HEK293T (cell line): ENCODE measurements at regions of chr3 and their contacts with region 1.

Region 1: DNA sequence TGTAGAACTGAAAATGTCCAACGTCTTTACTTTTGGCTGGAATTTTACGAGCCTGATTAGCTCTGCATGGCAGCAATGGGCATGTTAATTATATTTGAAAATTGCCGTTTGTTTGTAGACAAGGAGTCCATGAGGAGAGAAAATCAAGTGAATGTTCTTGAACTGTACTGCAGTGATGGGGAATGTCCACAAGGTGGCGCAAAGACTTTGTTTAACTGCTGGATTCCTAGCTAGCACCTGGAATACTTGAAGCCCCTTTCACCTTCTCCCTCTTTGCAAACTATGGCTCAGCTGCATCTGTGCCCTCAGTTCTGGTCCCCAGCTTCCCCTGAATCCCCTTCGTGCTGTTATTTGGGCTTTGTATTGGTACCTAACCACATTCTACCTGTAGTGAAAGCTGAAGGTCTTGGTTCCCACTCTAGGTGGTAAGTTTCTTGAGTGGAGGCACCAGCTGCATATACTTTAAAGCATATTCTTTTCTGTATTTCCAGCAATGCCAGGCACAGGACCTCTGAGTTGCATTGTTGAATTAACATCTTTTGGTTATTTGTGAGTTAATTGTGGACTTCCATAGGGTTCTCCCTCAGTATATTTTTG is 25.3 kb downstream of the EXOG start:
- DNase-seq: peak; percentile 70

Region 2: DNA sequence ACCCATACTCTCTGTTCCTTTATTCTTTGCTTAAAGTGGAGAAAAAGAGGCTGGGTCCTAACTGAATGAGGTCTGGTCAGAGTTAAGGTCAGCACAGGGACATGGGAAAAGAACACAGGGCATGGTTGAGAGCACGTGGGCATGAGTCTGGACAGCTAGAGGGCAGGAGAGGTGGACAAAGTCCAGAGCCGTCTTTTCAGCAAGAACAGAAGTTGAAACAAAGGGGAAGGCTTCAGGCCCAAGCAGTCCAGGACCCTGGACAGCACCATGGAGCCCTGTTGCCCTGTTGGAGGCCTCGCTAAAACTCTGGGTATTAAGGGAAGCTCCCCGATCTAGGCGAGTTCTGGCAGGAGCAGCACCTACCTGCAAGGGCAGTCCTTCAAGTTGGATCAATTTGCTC is 124.2 kb before region 1 on chr3:
- CTCF ChIA-PET with region 1: no interaction called
- POLR2A ChIA-PET with region 1: no interaction called
- DNase-seq: no peak

Region 3: DNA sequence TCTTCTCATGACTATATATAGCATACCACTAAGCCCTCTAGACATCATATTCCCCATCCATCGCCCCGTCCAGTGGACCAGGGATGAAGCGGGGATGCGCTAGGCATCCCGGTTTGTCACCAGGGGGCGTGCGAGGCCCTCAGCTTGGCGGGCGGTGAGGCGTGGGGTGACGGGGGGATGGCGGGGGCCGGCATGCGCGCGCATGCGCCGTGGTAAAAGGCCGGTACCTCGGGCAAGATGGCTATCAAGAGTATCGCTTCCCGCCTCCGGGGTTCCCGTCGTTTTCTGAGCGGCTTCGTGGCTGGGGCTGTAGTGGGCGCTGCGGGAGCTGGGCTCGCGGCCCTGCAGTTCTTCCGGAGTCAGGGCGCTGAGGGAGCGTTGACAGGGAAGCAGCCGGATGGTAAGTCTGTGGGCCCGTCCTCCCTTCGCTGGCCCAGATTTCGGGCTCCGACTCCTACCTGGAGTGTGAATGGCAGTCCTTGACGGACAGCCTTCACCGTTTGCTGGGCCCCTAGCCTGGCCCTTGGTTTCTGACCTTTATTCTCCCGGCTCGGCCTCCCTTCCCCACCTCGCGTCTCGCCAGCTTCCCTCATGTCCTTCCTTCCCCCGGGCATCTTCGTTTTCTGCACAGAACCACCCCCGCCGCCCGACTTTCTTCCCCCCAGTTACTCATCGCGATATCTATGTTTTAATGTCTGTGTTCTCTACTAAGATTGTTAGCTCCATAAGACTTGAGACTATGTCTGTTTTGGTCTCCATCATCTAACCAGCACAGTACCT is 25.2 kb before region 1 on chr3 and contains the start of gene EXOG:
- CTCF ChIA-PET with region 1: interaction called, 10 read pairs
- POLR2A ChIA-PET with region 1: no interaction called
- DNase-seq: peak; percentile 99

Region 4: GRCh38 chr3:38651154-38651789 is 129.8 kb after region 1 on chr3:
- CTCF ChIA-PET with region 1: interaction called, 31 read pairs
- POLR2A ChIA-PET with region 1: interaction called, 3 read pairs
- DNase-seq: peak; percentile 81

Region 5: DNA sequence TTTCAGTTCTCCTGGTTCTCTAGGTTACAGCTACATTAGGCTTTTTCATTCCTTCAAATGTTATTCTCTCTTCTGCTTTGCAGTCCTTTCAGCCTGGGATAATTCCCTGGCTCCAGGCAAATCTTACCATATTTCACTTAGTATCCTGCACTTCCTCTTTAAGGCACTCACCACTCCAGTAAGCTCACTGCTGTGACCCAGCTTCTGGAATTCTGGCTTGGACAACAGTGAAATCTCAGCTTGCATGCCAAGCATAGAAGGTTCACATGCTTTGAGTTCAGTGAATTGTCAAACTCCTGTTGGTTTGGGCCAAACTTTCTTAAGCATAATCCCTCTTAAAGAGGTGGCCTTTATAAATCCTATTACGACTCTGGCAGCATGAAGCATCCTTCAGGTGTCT is 225.2 kb after region 1 on chr3:
- CTCF ChIA-PET with region 1: no interaction called
- POLR2A ChIA-PET with region 1: no interaction called
- DNase-seq: no peak